ENCODE measurements at regions of chr17 and their contacts with region 1.

Region 1: GRCh38 chr17:47229535-47230443 is 20.6 kb downstream of the MYL4 start:
- DNase-seq: peak; percentile 81 to 94 (median 82)
- ATAC-seq: peak; percentile 93
- H3K4me3 ChIP-seq: no peak overlapping the region
- H3K27ac ChIP-seq: peak overlapping the region; percentile 35; the same call in 1 of the 3 replicates
- H3K4me1 ChIP-seq: peaks cover 7 to 29% of the 10 kb centered on the region in 2 experiments; a peak in 3 of 5 replicates
- H3K27me3 ChIP-seq: no peaks in the 10 kb centered on the region
- CTCF ChIP-seq: peak; percentile 95 to 99 (median 99)
- EP300 ChIP-seq: peak; percentile 30; the same call in 1 of the 2 replicates
- POLR2A ChIP-seq: no peak
- RAD21 ChIP-seq: peak; percentile 99 to 100

Region 2: DNA sequence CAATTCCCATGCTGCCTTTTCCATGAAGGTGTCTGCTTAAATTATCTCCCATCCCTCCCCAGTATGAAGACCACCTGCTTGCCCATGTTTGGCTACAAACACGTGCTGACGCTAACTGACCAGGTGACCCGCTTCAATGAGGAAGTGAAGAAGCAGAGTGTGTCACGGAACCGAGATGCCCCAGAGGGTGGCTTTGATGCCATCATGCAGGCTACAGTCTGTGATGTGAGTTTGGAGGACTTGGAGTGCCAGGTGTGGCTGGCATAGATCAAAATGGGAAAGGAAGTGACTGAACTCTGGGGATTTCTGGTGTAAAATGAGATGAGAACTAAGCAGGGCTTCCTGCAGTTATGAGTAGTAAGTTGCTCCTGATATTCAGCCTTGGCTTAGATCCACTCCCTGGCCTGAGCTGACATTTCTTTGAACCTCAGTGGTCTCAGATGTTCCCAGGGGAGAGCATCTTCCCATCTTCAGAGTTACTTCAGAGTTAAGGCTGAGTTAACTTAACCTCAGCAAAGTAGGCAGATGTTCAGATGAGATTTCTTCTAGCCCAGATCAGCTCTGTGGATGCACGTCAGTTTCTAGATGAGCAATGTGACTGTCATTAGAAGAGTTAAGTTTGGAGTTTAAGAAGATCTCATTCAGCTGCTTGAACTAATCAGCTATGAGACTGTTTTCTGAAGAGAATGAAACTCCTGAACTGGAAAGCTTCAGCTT is 56.6 kb after region 1 on chr17:
- CTCF ChIA-PET with region 1: interaction called, 3 read pairs
- POLR2A ChIA-PET with region 1: interaction called, 3 read pairs
- in situ Hi-C with region 1: no loop called
- intact Hi-C with region 1: loop called (anchors 2 kb)
- DNase-seq: peak in 1 of 4 experiments; percentile 51
- ATAC-seq: no peak
- H3K4me3 ChIP-seq: no peak overlapping the region
- H3K27ac ChIP-seq: peak overlapping the region; percentile 40; the same call in 2 of the 3 replicates
- H3K4me1 ChIP-seq: peaks cover 35 to 55% of the 10 kb centered on the region in 2 experiments
- H3K27me3 ChIP-seq: no peaks in the 10 kb centered on the region
- CTCF ChIP-seq: no peak
- EP300 ChIP-seq: no peak
- POLR2A ChIP-seq: no peak
- RAD21 ChIP-seq: no peak

Region 3: DNA sequence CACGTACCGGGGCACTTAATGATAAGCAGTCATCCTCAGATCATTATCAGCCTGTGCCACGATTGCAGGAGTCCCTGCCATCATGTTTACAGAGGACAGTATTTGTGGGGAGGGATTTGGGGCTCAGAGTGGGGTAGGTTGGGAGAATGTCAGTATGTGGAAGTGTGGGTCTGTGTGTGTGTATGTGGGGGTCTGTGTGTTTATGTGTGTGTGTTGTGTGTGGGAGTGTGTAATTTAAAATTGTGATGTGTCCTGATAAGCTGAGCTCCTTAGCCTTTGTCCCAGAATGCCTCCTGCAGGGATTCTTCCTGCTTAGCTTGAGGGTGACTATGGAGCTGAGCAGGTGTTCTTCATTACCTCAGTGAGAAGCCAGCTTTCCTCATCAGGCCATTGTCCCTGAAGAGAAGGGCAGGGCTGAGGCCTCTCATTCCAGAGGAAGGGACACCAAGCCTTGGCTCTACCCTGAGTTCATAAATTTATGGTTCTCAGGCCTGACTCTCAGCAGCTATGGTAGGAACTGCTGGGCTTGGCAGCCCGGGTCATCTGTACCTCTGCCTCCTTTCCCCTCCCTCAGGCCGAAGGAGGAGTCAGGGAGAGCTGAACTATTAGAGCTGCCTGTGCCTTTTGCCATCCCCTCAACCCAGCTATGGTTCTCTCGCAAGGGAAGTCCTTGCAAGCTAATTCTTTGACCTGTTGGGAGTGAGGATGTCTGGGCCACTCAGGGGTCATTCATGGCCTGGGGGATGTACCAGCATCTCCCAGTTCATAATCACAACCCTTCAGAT is 80.6 kb after region 1 on chr17:
- CTCF ChIA-PET with region 1: interaction called, 58 read pairs
- POLR2A ChIA-PET with region 1: interaction called, 4 read pairs
- in situ Hi-C with region 1: loop called (anchors 5 kb)
- intact Hi-C with region 1: loop called (anchors 1 kb)
- DNase-seq: no peak
- ATAC-seq: no peak
- H3K4me3 ChIP-seq: no peak overlapping the region
- H3K27ac ChIP-seq: no peak overlapping the region
- H3K4me1 ChIP-seq: peaks cover 3 to 8% of the 10 kb centered on the region in 2 experiments; a peak in 4 of 5 replicates
- H3K27me3 ChIP-seq: no peaks in the 10 kb centered on the region
- CTCF ChIP-seq: no peak
- EP300 ChIP-seq: no peak
- POLR2A ChIP-seq: no peak
- RAD21 ChIP-seq: no peak

Region 4: DNA sequence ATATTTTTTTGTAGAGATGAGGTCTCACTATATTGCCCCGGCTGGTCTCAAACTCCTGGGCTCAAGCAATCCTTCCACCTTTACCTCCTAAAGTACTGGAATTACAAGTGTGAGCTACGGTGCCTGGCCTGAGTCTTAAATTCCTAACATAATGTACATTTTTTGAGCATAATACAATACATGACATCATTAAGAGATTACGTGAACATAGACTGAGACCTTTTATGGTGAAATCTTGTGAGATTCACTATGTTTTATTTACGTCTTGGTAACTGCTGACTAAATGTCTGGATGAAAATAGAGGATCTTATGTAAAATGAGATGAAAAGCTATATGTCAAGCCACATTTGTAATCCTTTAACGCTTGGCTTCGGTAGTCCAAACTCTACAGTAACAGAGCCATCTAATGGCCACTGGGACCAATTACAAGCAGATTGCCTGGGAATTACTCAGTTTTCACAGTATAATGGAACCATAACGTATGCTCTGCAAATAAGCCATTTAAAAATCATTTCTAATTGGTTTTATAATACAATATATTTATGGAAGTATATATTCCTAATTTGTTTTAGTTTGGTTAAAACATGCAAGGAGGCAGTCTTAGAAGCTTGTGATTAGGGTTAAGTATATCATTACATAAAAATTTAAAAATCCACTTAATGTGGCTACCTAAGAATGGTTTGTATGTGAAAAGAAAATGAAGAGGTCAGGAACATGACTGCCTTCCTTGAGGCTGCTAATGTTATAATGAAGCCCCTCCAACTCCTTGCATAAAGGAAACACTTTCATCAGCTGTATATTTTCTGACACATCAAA is 85.9 kb after region 1 on chr17:
- CTCF ChIA-PET with region 1: interaction called, 58 read pairs
- POLR2A ChIA-PET with region 1: interaction called, 4 read pairs
- in situ Hi-C with region 1: loop called (anchors 5 kb)
- intact Hi-C with region 1: loop called (anchors 1 kb)
- DNase-seq: peak; percentile 55 to 80 (median 68)
- ATAC-seq: peak; percentile 94
- H3K4me3 ChIP-seq: no peak overlapping the region
- H3K27ac ChIP-seq: no peak overlapping the region
- H3K4me1 ChIP-seq: peaks cover 3 to 6% of the 10 kb centered on the region in 2 experiments; a peak in 2 of 5 replicates
- H3K27me3 ChIP-seq: no peaks in the 10 kb centered on the region
- CTCF ChIP-seq: peak; percentile 75 to 93 (median 81)
- EP300 ChIP-seq: no peak; the same call in 1 of the 2 replicates
- POLR2A ChIP-seq: no peak
- RAD21 ChIP-seq: peak; percentile 99 to 100

Region 5: GRCh38 chr17:47604598-47604927 is 374.8 kb after region 1 on chr17:
- CTCF ChIA-PET with region 1: no interaction called
- POLR2A ChIA-PET with region 1: no interaction called
- in situ Hi-C with region 1: no loop called
- intact Hi-C with region 1: no loop called
- DNase-seq: no peak
- ATAC-seq: no peak
- H3K4me3 ChIP-seq: no peak overlapping the region
- H3K27ac ChIP-seq: no peak overlapping the region
- H3K4me1 ChIP-seq: no peaks in the 10 kb centered on the region
- H3K27me3 ChIP-seq: no peaks in the 10 kb centered on the region
- CTCF ChIP-seq: no peak
- EP300 ChIP-seq: no peak
- POLR2A ChIP-seq: no peak
- RAD21 ChIP-seq: no peak